ENCODE measurements at regions of chr21 and their contacts with region 1.

Region 1: DNA sequence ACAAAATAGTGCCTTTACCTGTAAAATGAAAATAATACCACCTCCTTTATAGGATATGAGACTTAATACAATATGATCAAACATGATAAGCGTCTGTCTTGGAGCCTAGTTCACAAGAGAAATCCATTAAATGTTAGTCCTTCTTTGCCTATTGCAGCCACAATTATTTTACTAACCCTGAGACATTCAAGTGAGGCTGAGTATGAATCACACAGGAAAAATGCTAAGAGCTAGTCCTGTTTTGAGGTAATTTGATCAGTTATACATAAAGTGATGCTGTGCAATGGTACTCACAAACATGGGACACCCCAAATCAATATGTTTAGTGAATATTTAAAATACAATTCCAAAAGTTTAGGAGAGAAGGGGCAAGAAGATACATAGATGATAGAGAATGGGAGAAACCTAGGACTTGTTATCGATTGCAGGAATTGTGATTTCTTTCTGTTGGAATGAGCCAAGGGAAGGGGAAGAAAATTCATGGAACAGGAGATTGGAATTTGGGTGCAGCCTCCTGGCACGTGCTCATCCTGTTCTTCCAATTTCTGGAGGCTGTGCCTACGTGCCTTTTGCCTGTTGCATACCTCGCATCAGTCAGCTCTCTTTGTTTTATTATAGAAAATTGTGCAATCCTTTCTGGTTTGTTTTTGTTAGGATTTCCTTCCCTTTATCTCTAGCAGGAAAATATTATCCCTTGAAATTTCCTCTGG is 39.9 kb upstream of the BACH1 start:
- DNase-seq: peak; percentile 89
- ATAC-seq: peak; percentile 81
- H3K4me3 ChIP-seq: peak overlapping the region; percentile 34; the same call in 1 of the 2 replicates
- H3K27ac ChIP-seq: peak overlapping the region; percentile 55
- H3K4me1 ChIP-seq: peaks cover 53% of the 10 kb centered on the region
- H3K27me3 ChIP-seq: no peaks in the 10 kb centered on the region
- CTCF ChIP-seq: no peak

Region 2: GRCh38 chr21:29002442-29003144 is 256.2 kb before region 1 on chr21:
- CTCF ChIA-PET with region 1: no interaction called
- POLR2A ChIA-PET with region 1: no interaction called
- intact Hi-C with region 1: no loop called
- DNase-seq: peak; percentile 89
- ATAC-seq: peak; percentile 97
- H3K4me3 ChIP-seq: peak overlapping the region; percentile 74
- H3K27ac ChIP-seq: peak overlapping the region; percentile 56
- H3K4me1 ChIP-seq: peaks cover 3% of the 10 kb centered on the region; the same call in 1 of the 2 replicates
- H3K27me3 ChIP-seq: no peaks in the 10 kb centered on the region
- CTCF ChIP-seq: no peak

Region 3: GRCh38 chr21:29195981-29196669 is 62.7 kb before region 1 on chr21:
- CTCF ChIA-PET with region 1: no interaction called
- POLR2A ChIA-PET with region 1: no interaction called
- intact Hi-C with region 1: no loop called
- DNase-seq: peak; percentile 95
- ATAC-seq: peak; percentile 98
- H3K4me3 ChIP-seq: peak overlapping the region; percentile 57
- H3K27ac ChIP-seq: peak overlapping the region; percentile 64
- H3K4me1 ChIP-seq: peaks cover 34% of the 10 kb centered on the region
- H3K27me3 ChIP-seq: no peaks in the 10 kb centered on the region
- CTCF ChIP-seq: peak; percentile 81

Region 4: DNA sequence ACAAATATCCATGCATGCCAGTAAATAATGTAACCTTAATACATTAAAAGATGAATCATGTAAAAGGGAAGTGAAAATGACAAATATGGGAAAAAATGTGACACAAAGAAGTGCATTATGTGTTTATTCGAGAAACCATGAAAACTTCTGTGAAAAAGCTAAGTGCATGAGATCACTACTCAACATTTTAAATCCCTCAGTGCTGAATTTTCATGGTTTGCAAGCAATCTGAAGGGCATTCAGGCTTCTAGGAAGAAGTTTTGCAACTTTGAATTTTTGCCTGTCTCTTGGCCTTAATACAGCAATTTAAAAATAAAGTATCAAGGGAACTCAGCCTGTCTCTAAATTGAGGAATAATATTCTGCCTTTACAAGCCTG is 50.1 kb before region 1 on chr21:
- CTCF ChIA-PET with region 1: no interaction called
- POLR2A ChIA-PET with region 1: interaction called, 4 read pairs
- intact Hi-C with region 1: loop called (anchors 5 kb)
- DNase-seq: peak; percentile 78
- ATAC-seq: peak; percentile 68
- H3K4me3 ChIP-seq: no peak overlapping the region
- H3K27ac ChIP-seq: peak overlapping the region; percentile 75
- H3K4me1 ChIP-seq: peaks cover 17% of the 10 kb centered on the region
- H3K27me3 ChIP-seq: no peaks in the 10 kb centered on the region
- CTCF ChIP-seq: no peak

Region 5: GRCh38 chr21:29342363-29342957 is 83.7 kb after region 1 on chr21:
- CTCF ChIA-PET with region 1: no interaction called
- POLR2A ChIA-PET with region 1: no interaction called
- intact Hi-C with region 1: loop called (anchors 5 kb)
- DNase-seq: peak; percentile 96
- ATAC-seq: peak; percentile 99
- H3K4me3 ChIP-seq: peak overlapping the region; percentile 42
- H3K27ac ChIP-seq: peak overlapping the region; percentile 83
- H3K4me1 ChIP-seq: peaks cover 28% of the 10 kb centered on the region
- H3K27me3 ChIP-seq: no peaks in the 10 kb centered on the region
- CTCF ChIP-seq: peak; percentile 22; the same call in 1 of the 2 replicates